ENCODE measurements at regions of chr2 and their contacts with region 1.

Region 1: DNA sequence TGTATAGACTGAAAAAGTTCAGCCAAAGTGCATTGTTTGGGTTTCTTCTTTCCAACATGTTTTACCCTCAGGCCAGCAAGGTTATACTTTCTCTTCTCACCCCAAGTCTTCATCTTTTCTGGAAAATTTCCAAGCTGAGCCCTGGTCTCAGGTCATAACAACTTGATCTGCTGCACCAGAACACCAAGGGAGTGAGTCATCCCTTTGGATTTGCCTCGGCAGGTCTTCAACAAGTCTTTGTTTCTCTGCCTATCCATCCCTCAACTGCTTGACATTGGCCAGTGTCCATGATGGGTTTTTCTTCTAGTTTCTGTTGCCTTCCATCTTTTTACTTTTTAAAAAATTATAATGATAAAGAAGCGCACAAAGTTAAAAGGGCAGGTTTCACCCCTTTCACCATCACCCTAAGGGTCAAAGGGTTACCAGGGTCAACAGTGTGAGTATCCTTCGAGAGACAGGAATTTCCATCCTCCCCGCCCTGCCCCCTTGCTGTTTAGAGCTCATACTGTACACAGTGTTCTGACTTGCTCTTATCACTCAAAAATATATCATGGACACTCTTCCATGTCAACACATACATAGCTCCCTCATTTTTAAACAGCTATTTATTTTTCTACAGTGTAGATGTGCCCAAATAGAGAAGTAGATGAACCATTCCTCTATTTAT is 5.7 kb upstream of the SPATS2L start:
- DNase-seq: peak; percentile 98
- H3K4me3 Mint-ChIP-seq: peak overlapping the region; percentile 10
- H3K27ac Mint-ChIP-seq: peak overlapping the region; percentile 11
- H3K4me1 Mint-ChIP-seq: peaks cover 40% of the 10 kb centered on the region
- H3K27me3 Mint-ChIP-seq: no peaks in the 10 kb centered on the region
- CTCF ChIP-seq: no peak

Region 2: DNA sequence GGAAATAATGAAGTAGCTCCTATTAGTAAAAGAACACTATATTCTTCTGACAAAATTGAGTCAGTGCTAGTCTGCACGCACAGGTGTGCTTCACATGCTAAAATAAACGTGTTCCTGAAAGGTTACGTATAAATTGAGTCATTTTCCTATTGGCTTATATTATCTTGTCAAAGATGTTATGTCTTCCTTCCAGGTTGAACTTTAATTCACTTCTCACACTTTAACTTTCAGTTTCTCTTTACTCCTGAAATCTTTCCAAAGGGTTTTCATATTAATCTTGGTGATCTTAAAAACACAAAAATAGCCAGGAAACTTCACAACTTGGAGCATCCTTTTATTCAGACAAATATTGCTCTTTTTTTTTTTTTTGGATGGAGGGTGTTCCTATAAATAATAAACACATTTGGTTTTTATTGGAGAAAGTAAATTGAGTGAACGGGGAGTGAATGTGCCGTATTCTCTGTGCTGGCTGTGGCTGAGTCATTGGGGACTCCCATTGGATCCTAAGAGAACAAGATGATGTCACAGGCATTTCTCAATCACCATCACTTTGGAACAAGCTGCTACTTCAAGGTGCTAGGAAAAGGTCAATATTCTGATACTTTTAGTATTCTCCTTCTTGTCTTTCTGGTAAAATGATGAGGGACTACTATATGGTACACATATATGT is 144.5 kb before region 1 on chr2:
- CTCF ChIA-PET with region 1: no interaction called
- POLR2A ChIA-PET with region 1: interaction called, 14 read pairs
- intact Hi-C with region 1: loop called (anchors 5 kb)
- DNase-seq: peak; percentile 92
- H3K4me3 Mint-ChIP-seq: peak overlapping the region; percentile 70
- H3K27ac Mint-ChIP-seq: peak overlapping the region; percentile 77
- H3K4me1 Mint-ChIP-seq: peaks cover 6% of the 10 kb centered on the region
- H3K27me3 Mint-ChIP-seq: no peaks in the 10 kb centered on the region
- CTCF ChIP-seq: no peak

Region 3: GRCh38 chr2:200278694-200279316 is 22.0 kb before region 1 on chr2:
- CTCF ChIA-PET with region 1: interaction called, 5 read pairs
- POLR2A ChIA-PET with region 1: interaction called, 31 read pairs
- intact Hi-C with region 1: no loop called
- DNase-seq: peak; percentile 32
- H3K4me3 Mint-ChIP-seq: no peak overlapping the region
- H3K27ac Mint-ChIP-seq: peak overlapping the region; percentile 73
- H3K4me1 Mint-ChIP-seq: peaks cover 21% of the 10 kb centered on the region
- H3K27me3 Mint-ChIP-seq: no peaks in the 10 kb centered on the region
- CTCF ChIP-seq: no peak

Region 4: GRCh38 chr2:200288658-200289427 is 11.9 kb before region 1 on chr2:
- CTCF ChIA-PET with region 1: interaction called, 9 read pairs
- POLR2A ChIA-PET with region 1: interaction called, 17 read pairs
- intact Hi-C with region 1: no loop called
- DNase-seq: peak; percentile 83
- H3K4me3 Mint-ChIP-seq: no peak overlapping the region
- H3K27ac Mint-ChIP-seq: no peak overlapping the region
- H3K4me1 Mint-ChIP-seq: peaks cover 12% of the 10 kb centered on the region
- H3K27me3 Mint-ChIP-seq: no peaks in the 10 kb centered on the region
- CTCF ChIP-seq: no peak

Region 5: DNA sequence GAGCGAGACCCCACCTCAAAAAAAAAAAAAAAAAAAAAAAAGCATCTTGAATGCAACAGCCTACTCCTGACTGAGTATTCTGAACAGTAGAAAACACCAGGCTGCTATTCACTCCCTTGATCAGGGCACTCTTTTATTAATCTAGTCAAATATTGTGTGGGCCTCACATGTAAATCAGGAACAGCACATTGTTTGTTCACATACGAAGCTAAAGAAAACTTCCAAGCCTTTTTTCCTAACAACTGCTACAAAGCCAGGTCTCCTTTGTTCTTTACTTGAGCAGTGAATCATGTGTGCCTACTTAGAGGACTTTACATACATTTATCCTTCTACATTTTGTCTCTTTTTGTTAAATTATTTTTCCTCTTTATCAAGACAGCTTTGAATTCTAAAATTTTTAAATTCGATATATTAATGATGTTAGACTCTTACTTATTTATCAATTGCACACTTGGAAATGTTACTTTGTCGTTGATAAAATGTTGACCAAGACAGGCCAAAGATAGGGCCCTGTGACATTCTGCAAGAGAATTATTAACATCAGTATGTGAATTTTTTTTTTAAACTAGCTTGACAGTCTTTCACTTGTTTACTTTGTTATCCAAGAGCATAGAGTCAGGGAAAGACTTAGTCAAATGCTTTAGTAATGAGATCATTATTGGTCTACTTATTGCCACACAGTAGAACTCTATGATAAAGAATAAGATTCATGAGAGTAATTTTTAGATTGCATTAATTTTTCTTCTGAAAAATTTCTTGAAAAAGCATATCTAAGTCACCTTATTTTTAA is 19.0 kb after region 1 on chr2:
- CTCF ChIA-PET with region 1: interaction called, 6 read pairs
- POLR2A ChIA-PET with region 1: interaction called, 14 read pairs
- intact Hi-C with region 1: no loop called
- DNase-seq: peak; percentile 42
- H3K4me3 Mint-ChIP-seq: no peak overlapping the region
- H3K27ac Mint-ChIP-seq: peak overlapping the region; percentile 61
- H3K4me1 Mint-ChIP-seq: peaks cover 27% of the 10 kb centered on the region
- H3K27me3 Mint-ChIP-seq: no peaks in the 10 kb centered on the region
- CTCF ChIP-seq: no peak